Vagina (tissue), 2 donors: ENCODE measurements at regions of chr18 and their contacts with region 1.

Region 1: GRCh38 chr18:50662177-50662576 is 102.3 kb downstream of the MAPK4 start:
- DNase-seq: no peak
- H3K4me3 ChIP-seq: no peak overlapping the region
- H3K27ac ChIP-seq: no peak overlapping the region
- H3K4me1 ChIP-seq: no peaks in the 10 kb centered on the region
- H3K27me3 ChIP-seq: no peaks in the 10 kb centered on the region
- CTCF ChIP-seq: no peak
- POLR2A ChIP-seq: no peak

Region 2: GRCh38 chr18:50356036-50356945 is 305.9 kb before region 1 on chr18:
- intact Hi-C with region 1: loop called (anchors 5 kb)
- DNase-seq: no peak
- H3K4me3 ChIP-seq: no peak overlapping the region
- H3K27ac ChIP-seq: no peak overlapping the region
- H3K4me1 ChIP-seq: no peaks in the 10 kb centered on the region
- H3K27me3 ChIP-seq: no peaks in the 10 kb centered on the region
- CTCF ChIP-seq: no peak
- POLR2A ChIP-seq: no peak